ENCODE measurements at regions of chr6 and their contacts with region 1.

Region 1: GRCh38 chr6:117346142-117346930 is 79.4 kb downstream of the ROS1 start:
- DNase-seq: peak in 5 of 9 donors; percentile 3 to 35 (median 14)
- ATAC-seq: peak; percentile 44
- H3K4me3 ChIP-seq: no peak overlapping the region
- H3K4me3 Mint-ChIP-seq: no peak overlapping the region
- H3K27ac ChIP-seq: no peak overlapping the region
- H3K27ac Mint-ChIP-seq: no peak overlapping the region
- H3K4me1 ChIP-seq: no peaks in the 10 kb centered on the region
- H3K4me1 Mint-ChIP-seq: no peaks in the 10 kb centered on the region
- H3K27me3 ChIP-seq: no peaks in the 10 kb centered on the region
- H3K27me3 Mint-ChIP-seq: peaks cover 0 to 21% (median 7%) of the 10 kb centered on the region in 5 donors

Region 2: GRCh38 chr6:117126213-117126612 is 220.1 kb before region 1 on chr6:
- CTCF ChIA-PET with region 1: no interaction called
- POLR2A ChIA-PET with region 1: no interaction called
- intact Hi-C with region 1: no loop called
- DNase-seq: no peak
- ATAC-seq: no peak
- H3K4me3 ChIP-seq: no peak overlapping the region
- H3K4me3 Mint-ChIP-seq: no peak overlapping the region
- H3K27ac ChIP-seq: no peak overlapping the region
- H3K27ac Mint-ChIP-seq: no peak overlapping the region
- H3K4me1 ChIP-seq: no peaks in the 10 kb centered on the region
- H3K4me1 Mint-ChIP-seq: no peaks in the 10 kb centered on the region
- H3K27me3 ChIP-seq: no peaks in the 10 kb centered on the region
- H3K27me3 Mint-ChIP-seq: no peaks in the 10 kb centered on the region

Region 3: GRCh38 chr6:117449549-117450439 is 103.5 kb after region 1 on chr6:
- CTCF ChIA-PET with region 1: no interaction called
- POLR2A ChIA-PET with region 1: no interaction called
- intact Hi-C with region 1: loop called (anchors 1 to 5 kb)
- DNase-seq: peak; percentile 25 to 72 (median 60)
- ATAC-seq: peak; percentile 72
- H3K4me3 ChIP-seq: no peak overlapping the region
- H3K4me3 Mint-ChIP-seq: no peak overlapping the region
- H3K27ac ChIP-seq: no peak overlapping the region
- H3K27ac Mint-ChIP-seq: no peak overlapping the region
- H3K4me1 ChIP-seq: no peaks in the 10 kb centered on the region
- H3K4me1 Mint-ChIP-seq: peaks cover 0 to 5% (median 0%) of the 10 kb centered on the region in 7 donors
- H3K27me3 ChIP-seq: peaks cover 0 to 3% of the 10 kb centered on the region in 2 donors
- H3K27me3 Mint-ChIP-seq: peaks cover 19 to 73% (median 42%) of the 10 kb centered on the region in 5 donors

Region 4: DNA sequence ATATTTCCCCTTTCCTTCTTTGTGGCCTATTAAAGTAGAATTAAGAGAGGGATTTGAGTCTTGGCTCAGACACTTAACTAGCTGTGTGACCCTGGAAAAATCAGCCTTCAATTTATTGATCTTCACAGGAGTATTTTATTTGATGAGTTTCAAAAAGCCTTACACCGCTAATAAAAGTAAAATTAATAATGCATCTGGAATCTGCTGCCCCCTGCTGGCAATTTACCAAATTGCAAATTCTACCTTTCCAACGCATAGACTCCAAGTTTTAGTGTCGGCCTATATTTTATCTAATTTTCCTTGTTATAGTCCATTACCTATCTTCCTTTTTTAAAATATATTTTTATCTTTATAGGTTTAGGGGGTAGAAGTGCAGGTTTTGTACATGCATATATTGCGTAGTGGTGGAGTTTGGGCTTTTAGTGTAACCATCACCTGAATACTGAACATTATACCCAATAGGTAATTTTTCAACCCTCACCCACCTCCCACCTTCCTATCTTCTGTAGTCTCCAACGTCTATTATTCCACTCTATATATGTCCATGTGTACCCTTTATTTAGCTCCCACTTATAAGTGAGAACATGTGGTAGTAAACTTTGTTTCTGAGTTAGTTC is 209.7 kb after region 1 on chr6:
- CTCF ChIA-PET with region 1: interaction called, 5 read pairs
- POLR2A ChIA-PET with region 1: no interaction called
- intact Hi-C with region 1: loop called (anchors 1 kb)
- DNase-seq: peak; percentile 20 to 62 (median 46)
- ATAC-seq: peak; percentile 60
- H3K4me3 ChIP-seq: no peak overlapping the region
- H3K4me3 Mint-ChIP-seq: no peak overlapping the region
- H3K27ac ChIP-seq: no peak overlapping the region
- H3K27ac Mint-ChIP-seq: no peak overlapping the region
- H3K4me1 ChIP-seq: peaks cover 0 to under 1% of the 10 kb centered on the region in 2 donors
- H3K4me1 Mint-ChIP-seq: peaks cover under 1 to 3% (median 2%) of the 10 kb centered on the region in 7 donors
- H3K27me3 ChIP-seq: no peaks in the 10 kb centered on the region
- H3K27me3 Mint-ChIP-seq: peaks cover 0 to 2% (median 0%) of the 10 kb centered on the region in 5 donors

Region 5: GRCh38 chr6:117568831-117569410 is 222.6 kb after region 1 on chr6:
- CTCF ChIA-PET with region 1: no interaction called
- POLR2A ChIA-PET with region 1: no interaction called
- intact Hi-C with region 1: no loop called
- DNase-seq: no peak
- ATAC-seq: no peak
- H3K4me3 ChIP-seq: no peak overlapping the region
- H3K4me3 Mint-ChIP-seq: no peak overlapping the region
- H3K27ac ChIP-seq: no peak overlapping the region
- H3K27ac Mint-ChIP-seq: no peak overlapping the region
- H3K4me1 ChIP-seq: no peaks in the 10 kb centered on the region
- H3K4me1 Mint-ChIP-seq: peaks cover 0 to 12% (median 3%) of the 10 kb centered on the region in 7 donors
- H3K27me3 ChIP-seq: no peaks in the 10 kb centered on the region
- H3K27me3 Mint-ChIP-seq: no peaks in the 10 kb centered on the region

Region 6: GRCh38 chr6:117906853-117907599 is 560.7 kb after region 1 on chr6 and contains the start of gene SLC35F1:
- CTCF ChIA-PET with region 1: no interaction called
- POLR2A ChIA-PET with region 1: no interaction called
- intact Hi-C with region 1: loop called in 1 of 2 experiments (anchors 5 kb)
- DNase-seq: peak in 6 of 9 donors; percentile 2 to 48 (median 10)
- ATAC-seq: peak; percentile 56
- H3K4me3 ChIP-seq: no peak within 1 kb of the TSS
- H3K4me3 Mint-ChIP-seq: peak within 1 kb of the TSS; percentile 60 to 85 (median 70)
- H3K27ac ChIP-seq: no peak within 1 kb of the TSS
- H3K27ac Mint-ChIP-seq: no peak within 1 kb of the TSS
- H3K4me1 ChIP-seq: no peaks in the 10 kb centered on the region
- H3K4me1 Mint-ChIP-seq: peaks cover 0 to 17% (median 8%) of the 10 kb centered on the region in 7 donors
- H3K27me3 ChIP-seq: peaks cover 0 to 6% of the 10 kb centered on the region in 2 donors
- H3K27me3 Mint-ChIP-seq: peaks cover 56 to 72% (median 70%) of the 10 kb centered on the region in 5 donors
- total RNA-seq, gene SLC35F1: not detected

Region 7: GRCh38 chr6:118012944-118013343 is 666.6 kb after region 1 on chr6:
- CTCF ChIA-PET with region 1: no interaction called
- POLR2A ChIA-PET with region 1: no interaction called
- intact Hi-C with region 1: no loop called
- DNase-seq: no peak
- ATAC-seq: no peak
- H3K4me3 ChIP-seq: no peak overlapping the region
- H3K4me3 Mint-ChIP-seq: no peak overlapping the region
- H3K27ac ChIP-seq: no peak overlapping the region
- H3K27ac Mint-ChIP-seq: no peak overlapping the region
- H3K4me1 ChIP-seq: no peaks in the 10 kb centered on the region
- H3K4me1 Mint-ChIP-seq: no peaks in the 10 kb centered on the region
- H3K27me3 ChIP-seq: no peaks in the 10 kb centered on the region
- H3K27me3 Mint-ChIP-seq: peaks cover 0 to 30% (median 19%) of the 10 kb centered on the region in 5 donors

Region 8: GRCh38 chr6:119129148-119129967 is 1783.0 kb after region 1 on chr6:
- CTCF ChIA-PET with region 1: no interaction called
- POLR2A ChIA-PET with region 1: no interaction called
- intact Hi-C with region 1: loop called in 1 of 2 experiments (anchors 10 kb)
- DNase-seq: peak in 7 of 9 donors; percentile 18 to 63 (median 51)
- ATAC-seq: peak; percentile 80
- H3K4me3 ChIP-seq: no peak overlapping the region
- H3K4me3 Mint-ChIP-seq: peak overlapping the region in 1 of 10 donors; percentile 10
- H3K27ac ChIP-seq: no peak overlapping the region
- H3K27ac Mint-ChIP-seq: no peak overlapping the region
- H3K4me1 ChIP-seq: peaks cover 0 to 4% of the 10 kb centered on the region in 2 donors
- H3K4me1 Mint-ChIP-seq: peaks cover 0 to 8% (median 0%) of the 10 kb centered on the region in 7 donors
- H3K27me3 ChIP-seq: no peaks in the 10 kb centered on the region
- H3K27me3 Mint-ChIP-seq: peaks cover 0 to 17% (median 0%) of the 10 kb centered on the region in 5 donors

Measured in naive thymus-derived CD4-positive, alpha-beta T cell (primary cell).